Endothelial cell of umbilical vein (primary cell): ENCODE measurements at regions of chr1 and their contacts with region 1.

Region 1: DNA sequence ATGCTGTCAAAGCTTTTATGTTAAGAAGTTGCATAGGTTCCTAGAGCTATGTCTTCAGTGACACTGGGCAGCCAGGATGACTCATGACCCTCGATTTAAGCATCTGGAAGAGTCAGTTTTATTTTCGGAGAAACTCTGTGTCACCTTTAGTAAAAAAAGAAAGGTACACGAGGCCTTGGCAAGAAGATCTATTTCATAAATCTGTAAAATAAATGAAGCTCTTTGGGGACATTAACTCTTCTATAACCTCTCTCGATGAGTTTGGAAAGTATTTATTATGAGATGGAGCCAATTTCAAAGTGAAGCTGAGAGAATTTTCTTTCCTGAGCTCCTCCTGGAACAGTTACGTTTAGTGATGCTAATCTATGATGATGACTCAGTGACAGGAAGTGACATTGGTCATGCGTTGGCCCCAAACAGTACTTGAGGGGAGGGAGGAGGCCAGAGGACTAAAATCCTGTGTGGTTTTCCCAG is 156.5 kb downstream of the HLX start:
- DNase-seq: peak; percentile 84
- H3K4me3 ChIP-seq: peak overlapping the region in 1 of 3 experiments; percentile 42
- H3K27ac ChIP-seq: peak overlapping the region; percentile 69
- H3K4me1 ChIP-seq: peaks cover 48% of the 10 kb centered on the region
- H3K27me3 ChIP-seq: no peaks in the 10 kb centered on the region
- CTCF ChIP-seq: no peak
- POLR2A ChIP-seq: no peak

Region 2: GRCh38 chr1:220990427-220991339 is 45.0 kb before region 1 on chr1:
- CTCF ChIA-PET with region 1: interaction called, 10 read pairs
- POLR2A ChIA-PET with region 1: no interaction called
- dilution Hi-C with region 1: no loop called
- intact Hi-C with region 1: loop called (anchors 1 kb)
- DNase-seq: peak; percentile 82
- H3K4me3 ChIP-seq: no peak overlapping the region
- H3K27ac ChIP-seq: peak overlapping the region; percentile 24
- H3K4me1 ChIP-seq: peaks cover 15% of the 10 kb centered on the region
- H3K27me3 ChIP-seq: no peaks in the 10 kb centered on the region
- CTCF ChIP-seq: peak in 1 of 2 donors; percentile 17
- POLR2A ChIP-seq: no peak

Region 3: DNA sequence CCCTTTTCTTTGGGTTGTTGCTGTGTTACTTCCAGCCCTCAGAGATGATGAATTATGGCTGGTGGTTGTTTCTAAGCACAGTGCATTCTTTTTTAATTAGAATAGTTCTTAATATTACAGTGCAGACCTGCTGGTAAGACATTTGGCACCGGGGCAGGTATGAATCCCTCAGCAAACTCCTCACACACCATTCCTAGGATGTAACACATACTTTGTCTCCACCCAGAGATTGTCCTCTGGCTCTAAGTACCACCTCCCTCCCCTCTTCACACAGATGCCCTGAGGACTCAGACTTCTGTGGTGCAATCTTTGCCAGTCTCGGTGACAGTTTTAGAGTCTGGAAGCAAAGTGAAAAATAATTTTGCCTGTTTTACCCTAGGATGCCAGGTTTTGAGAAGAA is 13.4 kb before region 1 on chr1:
- CTCF ChIA-PET with region 1: no interaction called
- POLR2A ChIA-PET with region 1: no interaction called
- dilution Hi-C with region 1: no loop called
- intact Hi-C with region 1: no loop called
- DNase-seq: no peak
- H3K4me3 ChIP-seq: no peak overlapping the region
- H3K27ac ChIP-seq: no peak overlapping the region
- H3K4me1 ChIP-seq: no peaks in the 10 kb centered on the region
- H3K27me3 ChIP-seq: no peaks in the 10 kb centered on the region
- CTCF ChIP-seq: no peak
- POLR2A ChIP-seq: no peak

Region 4: DNA sequence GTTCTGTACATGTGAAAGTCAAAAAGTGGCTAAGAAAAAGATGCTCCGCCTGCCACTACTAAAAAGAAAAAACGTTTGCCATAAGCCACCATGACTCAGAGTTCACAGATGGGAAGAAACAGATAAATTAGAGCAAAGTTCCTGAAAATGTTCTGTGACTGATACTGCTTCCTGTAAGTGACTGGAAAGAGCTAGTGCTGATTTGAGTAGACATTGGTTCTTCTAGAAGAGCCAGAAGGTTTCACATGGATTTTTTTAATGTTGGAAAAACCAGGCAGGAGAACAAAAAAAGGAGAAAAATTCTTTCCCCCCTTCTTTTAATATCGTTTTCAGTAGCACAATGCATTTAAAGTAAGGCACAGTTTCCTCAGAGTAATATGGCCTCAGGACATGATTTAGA is 64.9 kb after region 1 on chr1:
- CTCF ChIA-PET with region 1: interaction called, 5 read pairs
- POLR2A ChIA-PET with region 1: no interaction called
- dilution Hi-C with region 1: no loop called
- intact Hi-C with region 1: loop called (anchors 2 kb)
- DNase-seq: peak; percentile 66
- H3K4me3 ChIP-seq: no peak overlapping the region
- H3K27ac ChIP-seq: peak overlapping the region; percentile 7
- H3K4me1 ChIP-seq: peaks cover 26% of the 10 kb centered on the region
- H3K27me3 ChIP-seq: no peaks in the 10 kb centered on the region
- CTCF ChIP-seq: no peak
- POLR2A ChIP-seq: no peak

Region 5: DNA sequence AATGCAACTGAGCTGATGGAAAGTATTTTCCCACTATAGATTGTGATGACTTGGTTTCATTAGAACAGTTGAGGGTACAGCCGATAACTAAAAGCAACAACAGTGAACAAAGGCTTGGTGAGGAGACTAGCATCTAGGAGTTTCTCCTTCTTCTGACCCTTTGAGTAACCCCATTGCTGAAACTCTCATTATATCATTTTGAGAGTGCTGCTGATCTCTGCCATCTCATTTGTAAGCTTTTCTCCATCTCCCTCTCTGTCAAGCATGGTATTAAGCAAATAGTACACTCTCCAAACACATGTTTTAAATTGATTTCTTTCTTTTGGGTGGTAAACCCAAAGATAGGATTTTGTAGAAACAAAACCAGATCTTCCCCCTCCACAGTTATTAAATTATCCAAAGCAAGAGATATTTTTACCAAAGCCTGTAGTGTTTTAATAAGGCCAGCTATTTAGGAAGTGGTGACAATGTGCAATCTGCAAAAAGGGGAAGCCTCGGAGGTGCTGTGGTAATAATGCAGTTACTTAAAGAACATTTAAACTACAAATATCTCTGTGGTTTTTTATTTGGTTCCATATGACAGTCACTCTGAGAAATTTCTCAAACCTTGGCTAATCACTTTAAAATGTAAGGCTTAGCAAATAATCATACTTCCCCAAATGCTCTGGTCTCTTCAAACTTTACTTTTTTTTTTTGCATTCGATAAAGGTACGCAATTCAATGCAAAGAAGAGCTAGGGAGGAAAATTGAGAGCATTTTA is 131.0 kb after region 1 on chr1:
- CTCF ChIA-PET with region 1: interaction called, 6 read pairs
- POLR2A ChIA-PET with region 1: no interaction called
- dilution Hi-C with region 1: no loop called
- intact Hi-C with region 1: loop called (anchors 1 kb)
- DNase-seq: no peak
- H3K4me3 ChIP-seq: no peak overlapping the region
- H3K27ac ChIP-seq: no peak overlapping the region
- H3K4me1 ChIP-seq: peaks cover 45% of the 10 kb centered on the region
- H3K27me3 ChIP-seq: no peaks in the 10 kb centered on the region
- CTCF ChIP-seq: no peak
- POLR2A ChIP-seq: no peak

Region 6: GRCh38 chr1:221284028-221284427 is 248.3 kb after region 1 on chr1:
- CTCF ChIA-PET with region 1: no interaction called
- POLR2A ChIA-PET with region 1: no interaction called
- dilution Hi-C with region 1: no loop called
- intact Hi-C with region 1: no loop called
- DNase-seq: peak; percentile 56
- H3K4me3 ChIP-seq: no peak overlapping the region
- H3K27ac ChIP-seq: no peak overlapping the region
- H3K4me1 ChIP-seq: no peaks in the 10 kb centered on the region
- H3K27me3 ChIP-seq: peaks cover 0 to 1% of the 10 kb centered on the region in 2 experiments
- CTCF ChIP-seq: no peak
- POLR2A ChIP-seq: no peak

Region 7: GRCh38 chr1:221394011-221394544 is 358.4 kb after region 1 on chr1:
- CTCF ChIA-PET with region 1: no interaction called
- POLR2A ChIA-PET with region 1: no interaction called
- dilution Hi-C with region 1: no loop called
- intact Hi-C with region 1: loop called (anchors 1 kb)
- DNase-seq: peak; percentile 99
- H3K4me3 ChIP-seq: no peak overlapping the region
- H3K27ac ChIP-seq: peak overlapping the region; percentile 77
- H3K4me1 ChIP-seq: peaks cover 28% of the 10 kb centered on the region
- H3K27me3 ChIP-seq: peaks cover 2 to 3% of the 10 kb centered on the region in 2 experiments
- CTCF ChIP-seq: no peak
- POLR2A ChIP-seq: no peak

Region 8: GRCh38 chr1:221487781-221488524 is 452.2 kb after region 1 on chr1:
- CTCF ChIA-PET with region 1: no interaction called
- POLR2A ChIA-PET with region 1: no interaction called
- dilution Hi-C with region 1: no loop called
- intact Hi-C with region 1: no loop called
- DNase-seq: no peak
- H3K4me3 ChIP-seq: no peak overlapping the region
- H3K27ac ChIP-seq: no peak overlapping the region
- H3K4me1 ChIP-seq: no peaks in the 10 kb centered on the region
- H3K27me3 ChIP-seq: no peaks in the 10 kb centered on the region
- CTCF ChIP-seq: no peak
- POLR2A ChIP-seq: no peak

Region 9: DNA sequence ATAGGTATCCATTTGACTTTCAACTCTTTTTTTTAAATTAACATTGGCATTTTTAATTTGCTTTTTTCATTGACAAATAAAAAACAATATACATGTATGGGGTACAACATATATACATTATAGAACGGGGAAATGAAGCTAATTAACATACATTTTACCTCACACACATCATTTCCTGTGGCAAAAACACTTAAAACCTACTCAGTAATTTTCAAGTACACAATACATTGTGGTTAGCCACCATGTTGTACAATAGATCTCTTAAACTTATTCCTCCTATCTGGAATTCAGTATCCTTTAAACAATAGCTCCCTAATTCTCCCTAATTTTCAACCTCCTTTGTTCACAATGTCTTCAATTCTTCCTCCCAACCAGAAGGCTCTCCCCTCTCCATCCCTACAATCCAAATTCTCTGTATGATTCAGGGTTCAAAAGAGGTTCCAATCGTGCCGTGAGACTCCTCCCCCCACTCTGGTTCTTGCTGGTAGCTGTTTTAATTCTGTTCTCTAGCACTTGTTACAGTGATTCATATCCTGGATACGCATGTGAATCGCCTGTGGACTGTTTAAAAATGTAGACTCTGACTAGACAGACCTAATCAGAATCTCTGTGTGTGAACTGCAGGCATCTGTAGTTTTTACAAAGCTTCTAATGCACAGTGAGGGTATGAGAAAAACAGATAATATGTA is 793.8 kb after region 1 on chr1:
- CTCF ChIA-PET with region 1: no interaction called
- POLR2A ChIA-PET with region 1: no interaction called
- dilution Hi-C with region 1: no loop called
- intact Hi-C with region 1: loop called (anchors 5 kb)
- DNase-seq: peak; percentile 93
- H3K4me3 ChIP-seq: no peak overlapping the region
- H3K27ac ChIP-seq: peak overlapping the region; percentile 63
- H3K4me1 ChIP-seq: peaks cover 58% of the 10 kb centered on the region
- H3K27me3 ChIP-seq: no peaks in the 10 kb centered on the region
- CTCF ChIP-seq: no peak
- POLR2A ChIP-seq: no peak